ENCODE measurements at regions of chr12 and their contacts with region 1.

Region 1: GRCh38 chr12:122614839-122615238 is 87.8 kb downstream of the KNTC1 start:
- DNase-seq: no peak
- ATAC-seq: no peak
- H3K4me3 ChIP-seq: no peak overlapping the region
- H3K27ac ChIP-seq: no peak overlapping the region
- H3K4me1 ChIP-seq: no peaks in the 10 kb centered on the region
- H3K27me3 ChIP-seq: no peaks in the 10 kb centered on the region
- CTCF ChIP-seq: no peak

Region 2: DNA sequence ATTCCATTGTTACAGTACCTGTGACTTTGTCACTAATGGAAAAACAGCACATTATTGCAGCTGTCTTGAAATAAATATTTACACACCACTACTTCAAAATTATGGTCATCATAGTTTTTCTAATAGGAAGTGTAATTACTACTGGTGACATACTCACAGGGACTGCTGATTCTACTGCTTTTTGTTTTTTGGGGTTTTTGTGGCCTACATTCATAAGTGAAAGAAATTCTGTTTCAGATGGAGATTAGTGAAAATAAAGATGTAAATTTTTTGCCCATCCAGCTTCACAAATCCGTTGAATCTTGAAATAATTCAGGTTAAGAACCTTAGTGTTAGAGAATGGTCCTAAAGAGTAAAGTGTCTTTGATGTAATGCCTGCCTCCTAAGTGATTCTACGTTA is 70.3 kb before region 1 on chr12:
- CTCF ChIA-PET with region 1: no interaction called
- POLR2A ChIA-PET with region 1: no interaction called
- in situ Hi-C with region 1: loop called (anchors 5 kb)
- intact Hi-C with region 1: no loop called
- DNase-seq: no peak
- ATAC-seq: no peak
- H3K4me3 ChIP-seq: no peak overlapping the region
- H3K27ac ChIP-seq: no peak overlapping the region
- H3K4me1 ChIP-seq: no peaks in the 10 kb centered on the region
- H3K27me3 ChIP-seq: no peaks in the 10 kb centered on the region
- CTCF ChIP-seq: no peak

Region 3: GRCh38 chr12:122558745-122559641 is 55.8 kb before region 1 on chr12:
- CTCF ChIA-PET with region 1: no interaction called
- POLR2A ChIA-PET with region 1: no interaction called
- in situ Hi-C with region 1: no loop called
- intact Hi-C with region 1: no loop called
- DNase-seq: no peak
- ATAC-seq: no peak
- H3K4me3 ChIP-seq: no peak overlapping the region
- H3K27ac ChIP-seq: no peak overlapping the region
- H3K4me1 ChIP-seq: no peaks in the 10 kb centered on the region
- H3K27me3 ChIP-seq: no peaks in the 10 kb centered on the region
- CTCF ChIP-seq: no peak